ENCODE measurements at regions of chr4 and their contacts with region 1.

Region 1: DNA sequence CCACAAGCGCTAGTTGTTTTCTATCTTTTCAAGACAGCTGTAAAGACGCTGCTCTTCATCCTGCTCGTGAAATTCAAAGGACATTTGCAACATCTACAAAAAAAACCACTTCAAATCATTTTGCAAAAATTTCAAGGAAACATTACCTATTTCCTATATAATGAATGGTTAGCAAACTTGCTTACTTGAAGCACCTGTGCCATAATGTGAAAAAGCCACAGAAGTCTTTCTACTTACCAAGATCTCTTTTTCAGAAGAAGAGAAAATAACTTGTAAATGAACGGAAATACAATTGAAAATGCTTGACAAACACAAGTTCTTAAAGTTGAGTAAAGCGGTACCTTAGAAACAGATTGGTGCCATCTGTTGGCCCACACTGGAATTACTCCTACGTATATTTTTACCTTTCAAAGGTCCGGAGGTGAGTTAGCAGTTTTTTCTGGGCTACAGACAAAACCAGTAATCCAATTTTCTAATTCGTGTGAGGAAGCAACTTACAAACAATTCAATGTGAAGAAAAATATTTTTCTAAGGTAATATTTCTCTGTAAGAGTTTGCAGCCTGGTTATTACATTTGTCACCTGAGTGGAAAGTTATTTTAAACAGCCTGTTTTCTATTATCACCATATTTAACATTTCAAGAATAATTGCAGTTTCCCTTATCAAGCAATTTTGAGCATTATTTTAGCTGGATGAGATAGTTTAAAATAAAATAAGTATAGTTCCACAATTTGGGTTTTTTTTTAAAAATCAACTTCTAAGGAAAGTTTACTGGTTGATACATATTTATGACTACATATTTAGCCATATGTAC is at the start of gene TLR6:
- DNase-seq: no peak
- ATAC-seq: peak; percentile 44
- total RNA-seq, gene TLR6: 1.5 TPM

Region 2: GRCh38 chr4:38759113-38759789 is 97.5 kb before region 1 on chr4:
- intact Hi-C with region 1: loop called (anchors 2 kb)
- DNase-seq: peak; percentile 78
- ATAC-seq: peak; percentile 85